ENCODE measurements at regions of chr2 and their contacts with region 1.

Region 1: DNA sequence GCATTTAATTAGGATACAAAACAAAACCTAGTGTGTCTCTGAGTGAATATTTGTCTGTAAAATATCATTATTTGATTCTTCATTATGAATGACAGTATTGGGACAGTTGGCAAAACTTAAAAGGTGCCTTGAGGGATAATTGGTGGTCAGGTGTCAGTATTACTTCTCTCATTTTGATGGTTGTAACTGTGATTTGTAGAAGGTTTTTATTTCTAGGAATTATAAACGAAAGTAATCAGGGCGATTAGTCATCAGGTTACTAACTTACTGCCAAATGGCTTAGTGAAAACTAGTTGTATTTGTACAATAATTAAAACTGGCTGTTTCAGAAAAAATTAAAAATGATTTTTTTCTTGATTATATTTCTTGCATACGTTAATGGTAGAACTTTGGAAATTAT is 117.6 kb downstream of the BIRC6 start:
- DNase-seq: no peak
- H3K4me3 ChIP-seq: no peak overlapping the region
- CTCF ChIP-seq: no peak

Region 2: GRCh38 chr2:32384529-32384928 is 89.9 kb before region 1 on chr2:
- in situ Hi-C with region 1: loop called (anchors 5 kb)
- DNase-seq: no peak
- H3K4me3 ChIP-seq: no peak overlapping the region
- CTCF ChIP-seq: no peak

Measured in astrocyte of the cerebellum (primary cell).